ENCODE measurements at regions of chr15 and their contacts with region 1.

Region 1: DNA sequence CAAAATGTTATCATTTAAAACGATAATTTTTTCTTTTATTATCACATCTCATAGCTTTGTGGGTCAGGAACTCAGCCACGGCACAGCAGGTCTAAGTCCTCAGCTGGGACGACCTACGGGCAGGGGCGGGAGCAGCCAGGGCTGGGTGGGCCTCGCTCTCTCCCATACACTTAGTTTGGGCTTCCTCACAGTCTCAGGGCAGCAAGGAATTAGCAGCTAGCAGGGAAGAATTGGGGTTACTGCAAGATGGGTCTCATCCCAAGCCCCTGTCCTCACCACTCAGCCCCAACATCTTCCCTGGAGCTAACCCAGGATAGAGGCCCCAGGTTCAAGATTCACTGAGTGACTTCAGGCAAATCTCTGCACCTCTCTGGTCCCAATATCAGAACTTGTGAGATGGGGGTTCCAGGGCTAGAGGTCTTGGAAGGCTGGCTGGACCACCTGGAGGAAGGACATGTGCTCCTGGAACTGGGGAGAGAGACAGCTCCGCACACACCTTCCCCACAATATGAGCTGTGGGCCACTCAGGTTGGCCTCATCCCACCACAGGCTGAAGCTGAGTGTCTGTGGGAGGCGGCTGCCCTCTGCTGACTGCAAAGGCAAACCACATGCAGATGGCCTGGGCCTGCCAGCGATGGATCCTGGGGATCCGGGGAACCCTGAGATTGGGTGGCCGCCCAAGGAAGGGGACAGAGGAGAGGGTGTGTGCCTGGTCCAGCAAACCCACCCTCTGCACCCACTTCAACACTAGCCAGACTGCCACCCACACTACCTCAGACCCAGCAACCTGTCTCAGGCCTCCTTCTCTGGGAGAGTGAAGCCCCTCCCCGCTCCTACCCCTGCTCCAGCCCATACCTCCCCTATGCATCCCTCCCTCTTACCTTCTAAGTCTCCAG is 45.0 kb downstream of the CYP11A1 start:
- DNase-seq: peak; percentile 32
- H3K4me3 ChIP-seq: no peak overlapping the region
- H3K27ac ChIP-seq: no peak overlapping the region
- H3K4me1 ChIP-seq: no peaks in the 10 kb centered on the region
- H3K27me3 ChIP-seq: no peaks in the 10 kb centered on the region
- CTCF ChIP-seq: peak; percentile 87 to 97

Region 2: GRCh38 chr15:73964736-73965093 is 357.7 kb before region 1 on chr15:
- CTCF ChIA-PET with region 1: no interaction called
- dilution Hi-C with region 1: loop called (anchors 25 kb)
- in situ Hi-C with region 1: loop called in 1 of 2 experiments (anchors 10 kb)
- intact Hi-C with region 1: no loop called
- DNase-seq: peak; percentile 64
- H3K4me3 ChIP-seq: no peak overlapping the region
- H3K27ac ChIP-seq: no peak overlapping the region
- H3K4me1 ChIP-seq: peaks cover 24% of the 10 kb centered on the region
- H3K27me3 ChIP-seq: no peaks in the 10 kb centered on the region
- CTCF ChIP-seq: peak; percentile 97

Region 3: DNA sequence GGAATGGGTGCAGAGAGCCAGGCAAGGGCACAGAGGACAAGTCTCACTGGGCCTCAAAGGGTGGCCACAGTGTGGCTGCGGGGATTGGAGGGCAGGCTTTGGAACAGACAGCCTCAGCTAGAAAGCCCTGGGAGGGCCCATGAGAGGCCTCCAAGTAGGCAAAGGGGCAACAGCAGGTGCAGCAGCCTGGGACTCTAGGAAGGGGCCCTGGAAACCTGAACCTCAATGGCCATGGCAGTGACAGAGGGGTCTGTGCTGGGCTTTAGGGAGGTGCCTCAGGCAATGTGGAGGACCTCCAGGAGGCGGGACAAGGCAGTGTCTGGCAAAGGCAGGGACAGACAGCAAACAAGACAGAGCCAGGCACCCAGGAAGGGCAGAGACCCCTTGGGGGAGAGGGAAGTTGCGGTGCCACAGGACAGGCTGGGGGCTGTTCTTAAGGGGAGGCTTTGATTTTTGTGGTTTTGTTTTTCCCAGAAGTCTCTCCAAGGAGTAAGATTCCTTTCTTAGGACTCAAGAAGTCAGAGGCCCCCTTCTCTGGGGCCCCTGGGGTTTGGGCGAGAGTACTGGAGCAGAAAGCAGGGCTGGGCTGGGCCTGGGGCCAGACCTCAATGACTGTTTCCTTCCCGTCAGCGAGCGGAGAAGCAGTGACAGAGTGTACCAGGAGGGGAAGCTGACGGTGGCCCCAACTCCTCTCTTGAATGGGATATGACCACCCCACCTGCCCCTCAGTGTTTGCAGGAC is 340.0 kb before region 1 on chr15:
- CTCF ChIA-PET with region 1: no interaction called
- dilution Hi-C with region 1: no loop called
- in situ Hi-C with region 1: loop called in 1 of 2 experiments (anchors 10 kb)
- intact Hi-C with region 1: no loop called
- DNase-seq: peak; percentile 79
- H3K4me3 ChIP-seq: no peak overlapping the region
- H3K27ac ChIP-seq: peak overlapping the region; percentile 76
- H3K4me1 ChIP-seq: peaks cover 57% of the 10 kb centered on the region
- H3K27me3 ChIP-seq: no peaks in the 10 kb centered on the region
- CTCF ChIP-seq: no peak

Region 4: DNA sequence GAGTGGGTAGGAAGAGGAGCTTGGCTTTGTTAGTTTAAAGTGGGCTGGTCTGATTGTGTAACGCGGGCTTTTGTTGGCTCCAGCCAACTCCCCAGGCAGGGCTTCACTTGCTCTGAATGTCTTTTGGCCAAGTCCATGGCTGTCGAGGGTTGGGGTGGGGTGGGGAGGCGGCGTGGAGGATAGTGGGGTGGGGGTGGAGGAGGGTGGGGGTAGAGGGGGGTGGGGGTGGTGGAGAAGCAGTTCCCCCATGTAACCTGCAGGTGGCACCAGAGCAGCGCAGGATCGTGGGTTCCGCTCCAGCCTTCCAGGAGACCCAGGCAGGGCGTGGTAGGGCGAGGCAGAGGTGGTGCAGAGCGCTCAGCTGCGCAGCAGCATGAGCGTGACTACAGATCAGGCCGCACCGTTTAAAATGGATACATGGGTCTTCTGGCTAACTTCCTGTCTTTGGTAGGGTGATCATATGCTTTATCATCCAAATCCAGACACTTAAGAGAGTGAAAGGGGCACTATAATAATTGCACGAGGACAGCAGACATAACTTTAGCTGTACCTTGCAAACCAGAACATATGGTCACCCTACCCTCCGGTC is 268.4 kb before region 1 on chr15:
- CTCF ChIA-PET with region 1: no interaction called
- dilution Hi-C with region 1: no loop called
- in situ Hi-C with region 1: no loop called
- intact Hi-C with region 1: loop called (anchors 1 kb)
- DNase-seq: peak; percentile 47
- H3K4me3 ChIP-seq: no peak overlapping the region
- H3K27ac ChIP-seq: no peak overlapping the region
- H3K4me1 ChIP-seq: peaks cover 24% of the 10 kb centered on the region
- H3K27me3 ChIP-seq: no peaks in the 10 kb centered on the region
- CTCF ChIP-seq: peak; percentile 36 to 77

Region 5: GRCh38 chr15:74127260-74127953 is 195.0 kb before region 1 on chr15:
- CTCF ChIA-PET with region 1: no interaction called
- dilution Hi-C with region 1: no loop called
- in situ Hi-C with region 1: no loop called
- intact Hi-C with region 1: loop called (anchors 1 kb)
- DNase-seq: peak; percentile 76
- H3K4me3 ChIP-seq: peak overlapping the region in 1 of 3 experiments; percentile 41
- H3K27ac ChIP-seq: no peak overlapping the region
- H3K4me1 ChIP-seq: peaks cover 13% of the 10 kb centered on the region
- H3K27me3 ChIP-seq: peaks cover 41% of the 10 kb centered on the region
- CTCF ChIP-seq: peak; percentile 80 to 99

Region 6: DNA sequence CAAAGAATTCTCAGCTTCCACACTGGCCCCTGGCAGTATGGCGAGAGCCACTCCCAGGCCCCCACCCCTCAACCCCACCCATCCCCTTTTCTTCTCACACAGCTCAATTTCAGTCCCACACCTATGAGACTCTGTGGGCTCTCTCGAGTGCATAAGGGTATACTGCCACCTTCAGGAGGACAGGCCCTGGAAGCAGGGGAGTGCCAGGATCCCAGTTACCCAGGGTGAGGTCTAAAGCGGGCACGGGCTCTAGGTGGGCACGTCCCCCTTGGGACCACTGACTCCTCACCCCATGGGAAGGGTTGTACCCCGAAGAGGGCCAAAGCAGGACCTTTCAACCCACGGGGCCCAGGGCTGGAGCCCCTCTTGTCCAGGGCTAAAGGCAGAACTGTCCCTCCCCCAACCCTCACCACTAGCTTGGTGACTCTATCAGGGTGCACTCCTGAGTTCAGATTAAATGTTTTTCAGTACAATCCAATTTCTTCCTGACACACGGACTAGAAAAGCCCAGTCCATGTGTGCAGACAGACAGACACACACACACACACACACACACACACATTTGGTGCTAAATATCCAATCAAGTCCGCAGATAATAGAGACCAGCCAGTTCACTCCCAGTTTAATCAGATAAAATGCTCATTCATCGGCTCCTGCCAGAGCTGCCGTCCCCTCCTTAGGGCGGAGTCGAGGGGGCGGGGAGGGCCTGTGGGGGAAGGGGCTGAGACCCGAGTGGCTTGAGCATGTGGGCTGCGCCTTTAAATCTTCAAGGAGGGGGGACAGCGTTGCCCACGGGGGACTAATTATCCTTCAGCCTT is 14.4 kb before region 1 on chr15:
- CTCF ChIA-PET with region 1: interaction called, 7 read pairs
- dilution Hi-C with region 1: no loop called
- in situ Hi-C with region 1: no loop called
- intact Hi-C with region 1: loop called (anchors 2 kb)
- DNase-seq: peak; percentile 58
- H3K4me3 ChIP-seq: no peak overlapping the region
- H3K27ac ChIP-seq: no peak overlapping the region
- H3K4me1 ChIP-seq: peaks cover 12% of the 10 kb centered on the region
- H3K27me3 ChIP-seq: no peaks in the 10 kb centered on the region
- CTCF ChIP-seq: peak; percentile 75 to 92

Region 7: DNA sequence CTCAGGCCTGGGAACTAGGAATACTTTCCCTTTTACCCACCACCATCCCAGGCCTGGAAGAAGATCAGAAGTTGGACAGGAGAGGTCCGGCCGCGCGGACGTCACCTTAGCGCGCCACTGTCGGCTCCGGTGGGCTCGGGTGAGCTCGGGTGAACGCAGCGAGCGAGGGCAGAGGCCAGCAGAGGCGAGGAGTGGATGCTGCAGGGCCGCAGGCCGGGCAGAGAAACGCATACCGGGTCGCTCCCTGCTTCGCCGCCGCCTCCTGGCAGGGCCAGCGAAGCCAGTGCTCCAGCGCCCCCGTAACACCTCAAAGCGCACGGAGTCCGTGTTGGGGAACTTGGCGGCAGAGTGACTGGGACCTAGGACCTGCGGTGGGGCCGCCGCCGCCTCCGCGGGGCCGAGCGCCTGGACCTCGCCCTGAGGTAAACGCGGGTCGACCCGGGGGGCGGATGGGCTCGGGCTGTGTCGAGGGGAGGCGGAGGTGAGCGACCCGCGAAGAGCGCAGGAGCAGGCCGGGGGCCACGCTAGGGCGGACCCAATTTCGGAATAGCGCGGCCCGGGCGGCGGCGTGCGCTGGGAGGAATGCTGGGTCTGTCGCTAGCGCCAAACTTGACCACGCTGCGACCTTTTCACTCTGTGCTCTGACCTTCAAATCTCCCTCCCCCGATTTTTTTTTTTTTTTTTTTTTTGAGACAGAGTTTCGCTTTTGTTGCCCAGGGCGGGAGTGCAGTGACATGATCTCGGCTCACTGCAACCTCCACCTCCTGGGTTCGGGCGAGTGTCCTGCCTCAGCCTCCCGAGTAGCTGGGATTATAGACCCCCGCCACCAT is 43.4 kb after region 1 on chr15:
- CTCF ChIA-PET with region 1: no interaction called
- dilution Hi-C with region 1: loop called (anchors 5 kb)
- in situ Hi-C with region 1: no loop called
- intact Hi-C with region 1: no loop called
- DNase-seq: no peak
- H3K4me3 ChIP-seq: peak overlapping the region; percentile 36 to 53 (median 45)
- H3K27ac ChIP-seq: no peak overlapping the region
- H3K4me1 ChIP-seq: peaks cover 8% of the 10 kb centered on the region
- H3K27me3 ChIP-seq: peaks cover 4% of the 10 kb centered on the region
- CTCF ChIP-seq: no peak